ENCODE measurements at regions of chr5 and their contacts with region 1.

Region 1: DNA sequence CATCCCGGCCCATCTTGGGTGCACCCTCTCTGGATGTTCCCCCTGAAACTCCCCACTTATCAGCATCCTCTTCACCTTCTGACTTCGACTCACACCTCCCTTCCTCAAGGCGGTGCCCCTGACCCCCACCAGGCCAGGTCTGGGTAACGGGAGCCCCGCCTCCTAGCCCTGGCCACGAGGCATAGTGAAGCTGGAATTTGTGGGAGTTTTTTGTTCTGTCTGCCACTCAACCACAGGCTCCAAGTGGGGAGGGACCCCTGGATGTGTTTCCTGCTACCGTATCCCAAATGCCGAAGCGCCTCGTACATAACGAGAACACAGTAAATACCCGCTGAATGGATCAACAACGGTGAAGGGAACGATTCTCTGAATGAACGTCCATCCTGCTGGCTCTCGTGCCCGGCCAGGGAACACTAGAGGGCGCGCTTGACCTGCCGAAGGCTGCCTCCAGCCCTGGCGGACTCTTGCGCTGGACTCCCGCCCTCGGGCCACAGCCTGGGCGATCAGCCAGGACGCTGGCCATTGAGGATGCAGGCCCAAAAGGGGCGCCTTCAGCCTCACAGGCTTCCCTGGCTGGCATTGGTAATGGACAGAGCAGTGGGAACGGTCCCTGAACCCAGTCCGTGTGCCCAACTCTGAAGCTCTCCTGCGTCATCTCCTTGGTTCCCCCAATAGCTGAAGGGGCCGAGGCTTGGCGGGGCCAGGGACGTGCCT is 47.3 kb upstream of the PHYKPL start:
- DNase-seq: peak; percentile 70 to 97 (median 89)
- ATAC-seq: peak; percentile 87 to 99 (median 98)
- H3K4me3 ChIP-seq: no peak overlapping the region
- H3K27ac ChIP-seq: no peak overlapping the region
- H3K4me1 ChIP-seq: no peaks in the 10 kb centered on the region
- H3K27me3 ChIP-seq: peaks cover 0 to 4% (median 0%) of the 10 kb centered on the region in 4 donors
- CTCF ChIP-seq: peak; percentile 66 to 92 (median 82)

Region 2: DNA sequence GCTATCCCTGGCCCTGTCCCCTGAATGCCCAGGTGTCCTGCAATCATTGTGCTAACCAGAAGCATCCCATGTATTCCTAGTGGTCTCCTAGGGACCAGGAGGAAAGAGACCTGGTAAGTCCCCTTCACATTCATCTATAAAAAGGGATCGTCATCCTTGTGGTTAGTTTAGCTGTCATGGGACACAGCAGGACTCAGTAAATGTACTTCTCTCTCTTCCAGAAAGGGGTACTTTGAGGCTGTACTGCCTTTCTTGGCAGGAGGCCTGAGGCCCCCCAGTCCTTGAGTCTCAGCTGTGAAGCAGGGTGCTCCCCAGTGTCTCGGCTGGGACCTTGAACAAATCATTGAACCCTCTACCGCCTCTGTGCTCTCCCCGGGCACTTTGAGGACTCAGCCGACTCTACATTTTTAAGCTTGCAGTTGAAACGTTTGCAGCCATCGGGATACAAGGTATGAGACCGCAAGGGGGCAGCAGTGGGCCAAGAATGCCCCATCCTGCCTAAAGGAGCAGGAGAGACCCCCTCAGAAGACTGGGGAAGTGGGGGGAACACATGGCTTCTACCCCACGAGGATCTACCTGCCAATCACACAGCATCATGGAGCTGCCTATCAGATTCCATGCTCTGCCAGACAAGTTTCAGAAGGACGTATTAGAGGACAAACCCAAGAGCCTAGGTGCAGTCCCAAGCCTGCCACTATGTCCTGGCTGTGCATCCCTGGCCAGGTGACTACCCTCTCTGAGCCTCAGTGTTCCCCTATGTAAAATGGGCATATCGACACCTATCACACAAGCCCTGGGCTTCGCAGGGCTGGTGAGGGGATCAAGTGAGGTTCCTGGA is 44.9 kb before region 1 on chr5:
- intact Hi-C with region 1: no loop called
- DNase-seq: peak; percentile 37 to 87 (median 62)
- ATAC-seq: peak in 2 of 4 donors; percentile 9 to 36
- H3K4me3 ChIP-seq: no peak overlapping the region
- H3K27ac ChIP-seq: no peak overlapping the region
- H3K4me1 ChIP-seq: peaks cover 0 to 36% (median 8%) of the 10 kb centered on the region in 3 donors
- H3K27me3 ChIP-seq: no peaks in the 10 kb centered on the region
- CTCF ChIP-seq: peak; percentile 42 to 56 (median 48)

Region 3: GRCh38 chr5:178551059-178551458 is 271.2 kb after region 1 on chr5:
- intact Hi-C with region 1: loop called in 2 of 3 experiments (anchors 5 kb)
- DNase-seq: no peak
- ATAC-seq: peak in 1 of 4 donors; percentile 50
- H3K4me3 ChIP-seq: no peak overlapping the region
- H3K27ac ChIP-seq: no peak overlapping the region
- H3K4me1 ChIP-seq: no peaks in the 10 kb centered on the region
- H3K27me3 ChIP-seq: peaks cover 0 to 6% (median 0%) of the 10 kb centered on the region in 4 donors
- CTCF ChIP-seq: peak; percentile 17 to 34 (median 22)

Region 4: DNA sequence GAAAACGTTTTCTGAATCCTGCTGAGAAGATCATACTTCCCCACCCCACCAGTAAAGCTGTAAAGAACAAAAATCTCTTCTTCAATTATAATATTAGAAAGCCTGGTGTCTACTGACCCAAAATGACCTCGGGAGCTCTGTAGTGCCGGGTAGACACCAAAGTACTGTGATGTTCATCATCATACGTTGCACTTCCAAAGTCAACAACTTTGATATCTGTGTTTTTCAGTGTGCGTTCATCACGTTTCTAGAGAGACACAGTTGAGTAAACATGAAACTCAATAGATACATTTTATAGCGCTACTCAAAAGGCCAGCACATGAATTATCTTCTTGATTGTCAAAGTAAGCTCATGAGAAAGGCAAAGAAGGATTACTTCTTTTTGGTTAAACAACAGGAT is 332.4 kb after region 1 on chr5:
- intact Hi-C with region 1: no loop called
- DNase-seq: no peak
- ATAC-seq: no peak
- H3K4me3 ChIP-seq: no peak overlapping the region
- H3K27ac ChIP-seq: no peak overlapping the region
- H3K4me1 ChIP-seq: no peaks in the 10 kb centered on the region
- H3K27me3 ChIP-seq: no peaks in the 10 kb centered on the region
- CTCF ChIP-seq: no peak

Region 5: GRCh38 chr5:178832618-178833201 is 552.8 kb after region 1 on chr5:
- intact Hi-C with region 1: loop called in 1 of 3 experiments (anchors 5 kb)
- DNase-seq: no peak
- ATAC-seq: no peak
- H3K4me3 ChIP-seq: no peak overlapping the region
- H3K27ac ChIP-seq: no peak overlapping the region
- H3K4me1 ChIP-seq: no peaks in the 10 kb centered on the region
- H3K27me3 ChIP-seq: no peaks in the 10 kb centered on the region
- CTCF ChIP-seq: no peak

Measured in pancreas (tissue), 10 donors.